ENCODE measurements at regions of chr5 and their contacts with region 1.

Region 1: GRCh38 chr5:75511435-75512384 is at the starts of genes CERT1 and POLK:
- DNase-seq: peak; percentile 99
- H3K4me3 Mint-ChIP-seq: peak within 1 kb of the TSS; percentile 98
- H3K27ac Mint-ChIP-seq: peak within 1 kb of the TSS; percentile 96
- H3K4me1 Mint-ChIP-seq: peaks cover 55% of the 10 kb centered on the region
- H3K27me3 Mint-ChIP-seq: no peaks in the 10 kb centered on the region
- total RNA-seq, gene CERT1: 32.3 to 34.4 TPM
- total RNA-seq, gene POLK: 33.9 to 36.5 TPM

Region 2: DNA sequence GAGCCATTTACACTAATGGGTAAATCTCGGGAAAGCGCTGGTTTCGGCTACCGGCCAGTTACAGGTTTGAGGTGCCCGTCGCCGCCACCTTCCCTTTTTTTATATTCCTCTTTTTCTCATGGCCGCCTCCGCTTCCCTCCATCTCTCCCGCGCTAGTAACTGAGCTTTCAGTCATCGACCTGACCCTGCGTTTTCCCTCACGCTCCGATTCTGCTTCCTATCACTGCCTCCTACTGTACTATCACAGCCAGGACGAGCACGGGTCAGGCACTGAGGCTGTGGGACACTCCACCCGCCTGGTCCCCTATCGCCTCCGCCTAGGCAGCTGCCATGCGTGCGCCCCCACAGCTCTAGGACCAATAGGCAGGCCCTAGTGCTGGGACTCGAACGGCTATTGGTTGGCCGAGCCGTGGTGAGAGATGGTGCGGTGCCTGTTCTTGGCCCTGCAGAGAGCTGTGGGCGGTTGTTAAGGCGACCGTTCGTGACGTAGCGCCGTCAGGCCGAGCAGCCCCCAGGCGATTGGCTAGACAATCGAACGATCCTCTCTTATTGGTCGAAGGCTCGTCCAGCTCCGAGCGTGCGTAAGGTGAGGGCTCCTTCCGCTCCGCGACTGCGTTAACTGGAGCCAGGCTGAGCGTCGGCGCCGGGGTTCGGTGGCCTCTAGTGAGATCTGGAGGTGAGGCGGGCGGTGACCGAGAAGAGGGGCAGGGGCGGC is 174.9 kb before region 1 on chr5 and contains the start of gene HMGCR:
- CTCF ChIA-PET with region 1: interaction called, 3 read pairs
- POLR2A ChIA-PET with region 1: interaction called, 4 read pairs
- intact Hi-C with region 1: loop called (anchors 1 kb)
- DNase-seq: peak; percentile 99
- H3K4me3 Mint-ChIP-seq: no peak within 1 kb of the TSS
- H3K27ac Mint-ChIP-seq: no peak within 1 kb of the TSS
- H3K4me1 Mint-ChIP-seq: peaks cover 35% of the 10 kb centered on the region
- H3K27me3 Mint-ChIP-seq: no peaks in the 10 kb centered on the region
- total RNA-seq, gene HMGCR: 57.7 to 68.6 TPM

Region 3: GRCh38 chr5:75389430-75389829 is 122.3 kb before region 1 on chr5:
- CTCF ChIA-PET with region 1: no interaction called
- POLR2A ChIA-PET with region 1: no interaction called
- intact Hi-C with region 1: loop called (anchors 5 kb)
- DNase-seq: peak; percentile 36
- H3K4me3 Mint-ChIP-seq: no peak overlapping the region
- H3K27ac Mint-ChIP-seq: peak overlapping the region; percentile 18
- H3K4me1 Mint-ChIP-seq: peaks cover 7% of the 10 kb centered on the region
- H3K27me3 Mint-ChIP-seq: no peaks in the 10 kb centered on the region

Region 4: DNA sequence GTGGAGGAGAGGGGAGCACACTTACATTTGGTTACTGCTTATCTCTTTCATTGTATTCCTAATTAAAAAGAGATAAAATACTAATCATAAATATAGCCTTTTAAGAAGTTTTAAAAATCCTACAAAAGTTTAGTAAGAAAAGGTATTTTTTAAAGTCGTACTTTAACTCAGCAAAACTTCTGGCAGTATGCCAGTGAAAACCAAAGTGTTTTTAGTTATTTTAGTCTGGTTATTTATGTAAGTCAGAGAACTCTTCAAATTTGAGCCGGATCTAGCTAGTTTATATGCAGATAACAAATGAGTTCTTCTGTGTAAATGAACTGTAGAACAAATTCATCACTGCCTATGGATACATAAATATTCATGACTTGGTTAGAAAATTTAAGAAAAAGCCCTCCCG is 63.1 kb after region 1 on chr5:
- CTCF ChIA-PET with region 1: no interaction called
- POLR2A ChIA-PET with region 1: no interaction called
- intact Hi-C with region 1: loop called (anchors 2 kb)
- DNase-seq: no peak
- H3K4me3 Mint-ChIP-seq: no peak overlapping the region
- H3K27ac Mint-ChIP-seq: peak overlapping the region; percentile 92
- H3K4me1 Mint-ChIP-seq: peaks cover 23% of the 10 kb centered on the region
- H3K27me3 Mint-ChIP-seq: no peaks in the 10 kb centered on the region